ENCODE measurements at regions of chr12 and their contacts with region 1.

Region 1: GRCh38 chr12:30985814-30986452 is 59.4 kb downstream of the TSPAN11 start:
- DNase-seq: peak; percentile 64
- H3K4me3 Mint-ChIP-seq: no peak overlapping the region
- H3K27ac Mint-ChIP-seq: no peak overlapping the region
- H3K4me1 Mint-ChIP-seq: peaks cover 5% of the 10 kb centered on the region
- H3K27me3 Mint-ChIP-seq: no peaks in the 10 kb centered on the region
- CTCF ChIP-seq: peak; percentile 80

Region 2: GRCh38 chr12:30847259-30847658 is 138.7 kb before region 1 on chr12:
- CTCF ChIA-PET with region 1: interaction called, 156 read pairs
- POLR2A ChIA-PET with region 1: interaction called, 6 read pairs
- intact Hi-C with region 1: loop called (anchors 1 kb)
- DNase-seq: peak; percentile 81
- H3K4me3 Mint-ChIP-seq: no peak overlapping the region
- H3K27ac Mint-ChIP-seq: no peak overlapping the region
- H3K4me1 Mint-ChIP-seq: peaks cover 7% of the 10 kb centered on the region
- H3K27me3 Mint-ChIP-seq: no peaks in the 10 kb centered on the region
- CTCF ChIP-seq: peak; percentile 87

Region 3: GRCh38 chr12:30970559-30971197 is 15.3 kb before region 1 on chr12:
- CTCF ChIA-PET with region 1: interaction called, 12 read pairs
- POLR2A ChIA-PET with region 1: no interaction called
- intact Hi-C with region 1: no loop called
- DNase-seq: peak; percentile 13
- H3K4me3 Mint-ChIP-seq: no peak overlapping the region
- H3K27ac Mint-ChIP-seq: no peak overlapping the region
- H3K4me1 Mint-ChIP-seq: no peaks in the 10 kb centered on the region
- H3K27me3 Mint-ChIP-seq: peaks cover 94% of the 10 kb centered on the region
- CTCF ChIP-seq: no peak

Region 4: DNA sequence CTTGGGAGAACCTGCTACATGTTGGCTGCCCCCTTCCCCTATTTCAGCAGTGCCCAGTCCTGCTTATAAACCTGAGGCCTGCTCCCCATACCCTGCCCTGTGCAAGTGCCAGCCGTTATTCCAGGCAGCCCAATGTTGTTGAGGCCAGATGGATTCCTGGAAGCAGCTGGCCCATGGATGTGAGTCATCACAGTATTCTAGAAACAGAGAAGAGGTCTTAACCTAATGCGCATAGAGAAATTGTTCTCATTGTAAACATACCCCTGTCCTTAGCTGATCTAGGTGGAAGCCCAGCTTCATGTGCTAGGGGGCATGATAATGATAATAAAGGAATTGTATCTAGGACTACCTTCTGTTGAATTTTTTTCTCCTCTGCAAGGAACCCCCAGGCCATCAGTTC is 10.3 kb after region 1 on chr12:
- CTCF ChIA-PET with region 1: interaction called, 10 read pairs
- POLR2A ChIA-PET with region 1: no interaction called
- intact Hi-C with region 1: no loop called
- DNase-seq: peak; percentile 36
- H3K4me3 Mint-ChIP-seq: no peak overlapping the region
- H3K27ac Mint-ChIP-seq: no peak overlapping the region
- H3K4me1 Mint-ChIP-seq: peaks cover 9% of the 10 kb centered on the region
- H3K27me3 Mint-ChIP-seq: no peaks in the 10 kb centered on the region
- CTCF ChIP-seq: no peak

Region 5: GRCh38 chr12:31238764-31239387 is 252.9 kb after region 1 on chr12:
- CTCF ChIA-PET with region 1: interaction called, 5 read pairs
- POLR2A ChIA-PET with region 1: no interaction called
- intact Hi-C with region 1: loop called (anchors 10 kb)
- DNase-seq: peak; percentile 81
- H3K4me3 Mint-ChIP-seq: peak overlapping the region; percentile 46
- H3K27ac Mint-ChIP-seq: no peak overlapping the region
- H3K4me1 Mint-ChIP-seq: peaks cover 19% of the 10 kb centered on the region
- H3K27me3 Mint-ChIP-seq: peaks cover 49% of the 10 kb centered on the region
- CTCF ChIP-seq: peak; percentile 62

Region 6: DNA sequence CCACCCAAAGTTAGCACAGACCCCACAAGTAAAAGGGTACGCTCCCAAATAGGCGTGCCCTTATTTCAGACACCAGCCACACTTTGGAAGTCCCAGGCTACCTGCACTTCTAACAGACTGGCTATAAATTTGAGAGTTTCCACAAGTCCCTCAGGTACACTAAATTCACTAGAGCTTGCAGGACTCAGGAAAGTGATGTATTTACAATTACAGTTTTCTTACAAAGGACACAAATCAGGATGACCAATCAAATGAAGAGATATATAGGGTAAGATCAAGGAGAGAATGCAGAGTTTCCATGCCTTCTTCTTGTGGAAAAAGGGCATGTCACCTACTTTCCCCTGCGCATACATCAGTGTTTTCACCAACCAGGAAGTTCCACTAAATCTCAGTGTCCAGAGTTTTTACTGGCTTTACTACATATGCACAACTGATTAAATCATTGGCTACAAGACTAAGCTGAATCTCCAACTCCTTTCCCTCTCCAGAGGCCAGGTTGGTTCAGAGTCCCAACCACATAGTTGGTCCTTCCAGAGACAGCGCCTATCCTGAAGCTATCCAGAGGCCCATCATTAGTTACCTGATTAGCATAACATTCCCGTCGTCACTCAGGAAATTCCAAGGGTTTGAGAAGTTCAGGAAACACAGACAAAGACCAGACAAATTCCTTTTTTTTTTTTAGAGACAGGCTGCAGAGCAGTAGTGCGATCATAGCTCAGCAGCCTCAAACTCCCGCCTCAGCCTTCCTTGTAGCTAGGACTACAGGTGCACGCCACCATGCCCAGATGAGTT is 520.8 kb after region 1 on chr12:
- CTCF ChIA-PET with region 1: no interaction called
- POLR2A ChIA-PET with region 1: no interaction called
- intact Hi-C with region 1: no loop called
- DNase-seq: no peak
- H3K4me3 Mint-ChIP-seq: no peak overlapping the region
- H3K27ac Mint-ChIP-seq: peak overlapping the region; percentile 21
- H3K4me1 Mint-ChIP-seq: peaks cover 25% of the 10 kb centered on the region
- H3K27me3 Mint-ChIP-seq: no peaks in the 10 kb centered on the region
- CTCF ChIP-seq: no peak